ENCODE measurements at regions of chr2 and their contacts with region 1.

Region 1: GRCh38 chr2:128321784-128322714 is 3.4 kb upstream of the HS6ST1 start:
- H3K4me3 Mint-ChIP-seq: peak overlapping the region; percentile 71
- H3K27ac Mint-ChIP-seq: peak overlapping the region; percentile 74
- H3K4me1 Mint-ChIP-seq: peaks cover 21% of the 10 kb centered on the region
- H3K27me3 Mint-ChIP-seq: peaks cover 38% of the 10 kb centered on the region

Region 2: GRCh38 chr2:128178650-128179460 is 143.2 kb before region 1 on chr2:
- intact Hi-C with region 1: loop called (anchors 5 kb)
- H3K4me3 Mint-ChIP-seq: no peak overlapping the region
- H3K27ac Mint-ChIP-seq: no peak overlapping the region
- H3K4me1 Mint-ChIP-seq: peaks cover 5% of the 10 kb centered on the region
- H3K27me3 Mint-ChIP-seq: no peaks in the 10 kb centered on the region

Region 3: DNA sequence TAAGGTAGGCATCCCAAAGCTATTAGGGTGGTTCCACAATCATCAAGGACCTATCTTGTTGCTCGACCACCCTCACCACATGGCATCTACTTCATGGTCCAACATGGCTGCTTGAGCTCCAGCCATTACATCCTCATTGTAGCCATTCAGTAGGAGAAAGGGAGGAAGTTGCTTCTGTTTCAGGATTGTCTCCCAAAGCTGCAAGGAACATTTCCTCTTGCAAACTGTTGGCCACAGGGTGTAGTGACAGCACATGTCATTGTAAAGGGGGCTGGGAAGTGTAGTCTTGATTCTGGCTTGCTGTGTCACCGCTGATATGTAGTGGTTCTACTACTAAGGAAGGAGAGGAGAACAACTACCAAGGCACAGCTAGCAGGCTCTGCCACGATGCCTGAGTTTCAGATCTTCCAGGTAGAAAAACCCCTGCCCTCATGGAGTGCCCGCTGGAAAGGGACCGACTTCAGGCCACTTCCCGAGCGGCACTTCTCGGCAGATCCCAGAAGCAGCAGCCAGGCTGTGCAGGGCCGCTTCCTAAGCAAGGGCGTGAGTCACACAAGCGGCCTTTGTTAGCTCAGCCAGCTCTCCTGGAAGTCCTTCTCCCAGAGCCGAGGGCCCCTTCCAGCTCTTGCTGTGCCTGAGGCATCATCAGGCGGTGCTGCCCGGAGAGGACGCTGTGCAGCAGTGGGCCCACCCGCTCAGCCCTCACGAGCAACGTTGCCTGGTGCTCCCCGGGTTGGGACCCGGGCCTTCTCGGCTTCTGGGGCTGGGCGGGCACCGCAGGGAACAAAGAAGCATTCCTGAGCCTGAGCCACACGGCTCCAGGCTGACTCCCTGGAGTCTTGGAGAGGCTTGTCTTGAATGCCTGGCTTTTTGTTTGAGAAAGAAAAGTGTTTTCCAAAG is 61.6 kb before region 1 on chr2:
- intact Hi-C with region 1: no loop called
- H3K4me3 Mint-ChIP-seq: no peak overlapping the region
- H3K27ac Mint-ChIP-seq: no peak overlapping the region
- H3K4me1 Mint-ChIP-seq: no peaks in the 10 kb centered on the region
- H3K27me3 Mint-ChIP-seq: peaks cover 3% of the 10 kb centered on the region

Region 4: GRCh38 chr2:128374001-128374710 is 52.1 kb after region 1 on chr2:
- intact Hi-C with region 1: no loop called
- H3K4me3 Mint-ChIP-seq: no peak overlapping the region
- H3K27ac Mint-ChIP-seq: no peak overlapping the region
- H3K4me1 Mint-ChIP-seq: peaks cover 11% of the 10 kb centered on the region
- H3K27me3 Mint-ChIP-seq: peaks cover 16% of the 10 kb centered on the region

Region 5: GRCh38 chr2:128535953-128536352 is 213.9 kb after region 1 on chr2:
- intact Hi-C with region 1: loop called (anchors 2 kb)
- H3K4me3 Mint-ChIP-seq: no peak overlapping the region
- H3K27ac Mint-ChIP-seq: no peak overlapping the region
- H3K4me1 Mint-ChIP-seq: peaks cover 10% of the 10 kb centered on the region
- H3K27me3 Mint-ChIP-seq: peaks cover 6% of the 10 kb centered on the region

Region 6: GRCh38 chr2:128736689-128737545 is 414.9 kb after region 1 on chr2:
- intact Hi-C with region 1: loop called (anchors 10 kb)
- H3K4me3 Mint-ChIP-seq: peak overlapping the region; percentile 74
- H3K27ac Mint-ChIP-seq: peak overlapping the region; percentile 62
- H3K4me1 Mint-ChIP-seq: peaks cover 44% of the 10 kb centered on the region
- H3K27me3 Mint-ChIP-seq: peaks cover 17% of the 10 kb centered on the region

Region 7: DNA sequence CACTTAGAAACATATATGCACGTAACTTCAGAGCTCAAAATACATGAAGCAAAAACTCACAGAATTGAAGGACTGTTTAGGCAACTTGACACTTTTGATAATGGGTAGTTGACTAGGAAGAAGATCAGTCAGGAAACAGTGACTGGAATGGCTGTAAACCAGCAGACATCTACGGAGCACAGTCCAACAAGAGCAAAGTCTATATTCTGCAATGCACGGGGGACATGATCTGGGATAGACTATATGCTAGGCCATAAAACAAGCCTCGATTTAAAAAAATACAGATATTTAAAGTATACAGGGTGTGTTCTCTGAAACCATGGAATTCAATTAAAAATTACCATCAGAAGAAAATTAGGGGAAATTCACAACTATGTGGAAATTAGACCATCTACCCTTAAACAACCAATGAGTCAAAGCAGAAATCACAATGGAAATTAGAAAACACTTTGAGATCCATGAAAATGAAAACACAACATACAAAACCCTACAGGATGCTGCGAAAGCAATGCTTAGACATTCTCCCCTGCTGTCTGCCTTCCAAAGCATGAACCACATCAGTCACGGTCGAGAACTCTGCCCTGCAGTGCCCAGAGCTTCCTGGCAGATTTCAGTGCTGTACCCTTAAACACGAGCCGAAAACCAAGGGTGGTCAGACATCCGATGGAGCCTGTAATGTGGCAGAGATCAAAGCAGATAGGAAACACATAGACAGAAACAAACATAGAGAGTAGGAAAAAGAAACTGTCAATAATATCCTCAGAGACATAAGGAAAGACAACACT is 648.5 kb after region 1 on chr2:
- intact Hi-C with region 1: no loop called
- H3K4me3 Mint-ChIP-seq: no peak overlapping the region
- H3K27ac Mint-ChIP-seq: no peak overlapping the region
- H3K4me1 Mint-ChIP-seq: no peaks in the 10 kb centered on the region
- H3K27me3 Mint-ChIP-seq: no peaks in the 10 kb centered on the region